A673 (cell line): ENCODE measurements at regions of chr20 and their contacts with region 1.

Region 1: DNA sequence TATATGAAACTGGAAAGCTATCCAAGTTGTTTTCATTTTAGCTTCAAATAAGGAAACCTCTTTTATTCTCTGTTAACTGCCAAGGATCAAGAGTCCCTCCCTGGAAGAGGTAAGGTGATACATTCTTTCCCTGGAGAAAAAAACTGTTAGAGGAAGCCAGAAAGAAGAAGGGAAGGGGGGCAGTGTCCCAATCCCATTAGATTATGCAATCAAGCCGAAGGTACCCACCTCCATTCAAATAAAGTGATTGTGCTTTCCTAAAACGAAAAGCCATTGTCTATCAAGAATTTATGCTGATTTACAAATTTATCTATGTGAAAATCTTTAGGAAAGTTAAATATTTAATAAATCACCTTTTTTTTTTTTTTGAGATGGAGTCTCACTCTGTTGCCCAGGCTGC is 9.5 kb upstream of the UQCC1 start:
- DNase-seq: no peak
- H3K4me3 ChIP-seq: no peak overlapping the region
- H3K27ac ChIP-seq: no peak overlapping the region
- H3K4me1 ChIP-seq: no peaks in the 10 kb centered on the region
- H3K27me3 ChIP-seq: peaks cover 4% of the 10 kb centered on the region
- CTCF ChIP-seq: no peak

Region 2: DNA sequence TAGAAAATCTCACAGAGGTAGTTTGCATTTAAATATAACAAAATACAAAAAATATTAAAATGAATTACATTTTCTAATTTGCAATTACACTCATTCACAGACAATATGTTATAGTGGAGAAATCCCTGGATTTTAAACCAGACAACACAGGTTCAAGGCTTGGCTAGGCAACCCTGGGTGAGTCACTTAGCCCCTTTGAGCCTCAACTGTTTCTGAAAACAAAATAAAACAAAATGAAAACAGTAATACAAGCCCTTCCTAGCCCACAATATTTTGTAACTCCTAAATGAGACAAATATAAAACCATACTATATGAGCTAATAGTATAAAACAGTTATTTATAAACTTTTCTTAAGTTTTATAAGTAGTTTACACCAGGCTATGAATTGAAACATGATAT is 50.6 kb before region 1 on chr20:
- CTCF ChIA-PET with region 1: interaction called, 10 read pairs
- POLR2A ChIA-PET with region 1: no interaction called
- intact Hi-C with region 1: no loop called
- DNase-seq: no peak
- H3K4me3 ChIP-seq: no peak overlapping the region
- H3K27ac ChIP-seq: no peak overlapping the region
- H3K4me1 ChIP-seq: peaks cover 8% of the 10 kb centered on the region
- H3K27me3 ChIP-seq: no peaks in the 10 kb centered on the region
- CTCF ChIP-seq: no peak

Region 3: GRCh38 chr20:35502352-35502751 is 81.0 kb after region 1 on chr20:
- CTCF ChIA-PET with region 1: no interaction called
- POLR2A ChIA-PET with region 1: no interaction called
- intact Hi-C with region 1: no loop called
- DNase-seq: no peak
- H3K4me3 ChIP-seq: no peak overlapping the region
- H3K27ac ChIP-seq: no peak overlapping the region
- H3K4me1 ChIP-seq: no peaks in the 10 kb centered on the region
- H3K27me3 ChIP-seq: no peaks in the 10 kb centered on the region
- CTCF ChIP-seq: no peak